ENCODE measurements at regions of chr5 and their contacts with region 1.

Region 1: GRCh38 chr5:157582731-157583620 is 7.4 kb upstream of the ADAM19 start:
- H3K4me3 Mint-ChIP-seq: no peak overlapping the region
- H3K27ac Mint-ChIP-seq: peak overlapping the region; percentile 57
- H3K4me1 Mint-ChIP-seq: peaks cover 56% of the 10 kb centered on the region
- H3K27me3 Mint-ChIP-seq: peaks cover 11% of the 10 kb centered on the region

Region 2: DNA sequence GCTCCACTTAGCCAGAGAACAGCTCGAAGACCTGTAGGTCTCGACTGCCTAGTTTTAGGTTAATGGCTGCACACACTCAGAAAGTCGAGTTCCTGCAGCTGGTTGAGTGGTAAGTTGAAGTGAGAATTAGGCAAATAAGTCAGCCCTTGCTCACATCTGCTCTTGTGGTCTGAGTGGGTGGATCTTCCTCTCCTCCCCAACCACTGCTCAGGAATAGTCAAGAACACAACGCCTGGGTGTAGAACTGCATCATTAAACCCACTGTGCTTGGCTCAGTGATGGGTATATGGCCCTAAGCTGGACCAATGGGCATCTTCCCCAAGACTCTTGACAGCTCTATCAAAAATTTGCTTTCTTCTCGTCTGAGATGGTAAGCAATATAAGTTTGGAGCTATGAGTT is 13.5 kb after region 1 on chr5:
- intact Hi-C with region 1: loop called (anchors 2 kb)
- H3K4me3 Mint-ChIP-seq: no peak overlapping the region
- H3K27ac Mint-ChIP-seq: peak overlapping the region; percentile 80
- H3K4me1 Mint-ChIP-seq: peaks cover 90% of the 10 kb centered on the region
- H3K27me3 Mint-ChIP-seq: peaks cover 2% of the 10 kb centered on the region